ENCODE measurements at regions of chr14 and their contacts with region 1.

Region 1: GRCh38 chr14:32129124-32129523 is 52.0 kb downstream of the ARHGAP5 start:
- DNase-seq: no peak
- H3K4me3 Mint-ChIP-seq: peak overlapping the region; percentile 60
- H3K27ac Mint-ChIP-seq: peak overlapping the region; percentile 77
- H3K4me1 Mint-ChIP-seq: peaks cover 47% of the 10 kb centered on the region
- H3K27me3 Mint-ChIP-seq: no peaks in the 10 kb centered on the region
- CTCF ChIP-seq: no peak

Region 2: DNA sequence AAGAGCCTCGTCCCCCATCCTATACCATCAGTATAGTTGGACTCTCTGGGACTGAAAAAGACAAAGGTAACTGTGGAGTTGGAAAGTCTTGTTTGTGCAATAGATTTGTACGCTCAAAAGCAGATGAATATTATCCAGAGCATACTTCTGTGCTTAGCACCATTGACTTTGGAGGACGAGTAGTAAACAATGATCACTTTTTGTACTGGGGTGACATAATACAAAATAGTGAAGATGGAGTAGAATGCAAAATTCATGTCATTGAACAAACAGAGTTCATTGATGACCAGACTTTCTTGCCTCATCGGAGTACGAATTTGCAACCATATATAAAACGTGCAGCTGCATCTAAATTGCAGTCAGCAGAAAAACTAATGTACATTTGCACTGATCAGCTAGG is 38.4 kb before region 1 on chr14:
- CTCF ChIA-PET with region 1: no interaction called
- intact Hi-C with region 1: no loop called
- DNase-seq: no peak
- H3K4me3 Mint-ChIP-seq: no peak overlapping the region
- H3K27ac Mint-ChIP-seq: no peak overlapping the region
- H3K4me1 Mint-ChIP-seq: peaks cover 20% of the 10 kb centered on the region
- H3K27me3 Mint-ChIP-seq: no peaks in the 10 kb centered on the region
- CTCF ChIP-seq: no peak

Region 3: GRCh38 chr14:32202998-32203882 is 74.1 kb after region 1 on chr14 and contains the start of gene RNU6-8:
- CTCF ChIA-PET with region 1: no interaction called
- intact Hi-C with region 1: loop called (anchors 1 kb)
- DNase-seq: peak; percentile 90
- H3K4me3 Mint-ChIP-seq: peak within 1 kb of the TSS; percentile 94
- H3K27ac Mint-ChIP-seq: peak within 1 kb of the TSS; percentile 99
- H3K4me1 Mint-ChIP-seq: peaks cover 12% of the 10 kb centered on the region
- H3K27me3 Mint-ChIP-seq: no peaks in the 10 kb centered on the region
- CTCF ChIP-seq: no peak
- total RNA-seq, gene RNU6-8: not detected in 2 replicates

Measured in Calu3 (cell line).